ENCODE measurements at regions of chr13 and their contacts with region 1.

Region 1: GRCh38 chr13:55038230-55038629 is 2009.6 kb downstream of the OLFM4 start:
- DNase-seq: no peak
- H3K4me3 ChIP-seq: no peak overlapping the region
- H3K27ac ChIP-seq: no peak overlapping the region
- H3K4me1 ChIP-seq: no peaks in the 10 kb centered on the region
- H3K27me3 ChIP-seq: no peaks in the 10 kb centered on the region
- CTCF ChIP-seq: no peak
- POLR2A ChIP-seq: no peak

Region 2: GRCh38 chr13:54845351-54845965 is 192.8 kb before region 1 on chr13:
- intact Hi-C with region 1: loop called (anchors 10 kb)
- DNase-seq: no peak
- H3K4me3 ChIP-seq: no peak overlapping the region
- H3K27ac ChIP-seq: no peak overlapping the region
- H3K4me1 ChIP-seq: no peaks in the 10 kb centered on the region
- H3K27me3 ChIP-seq: no peaks in the 10 kb centered on the region
- CTCF ChIP-seq: no peak
- POLR2A ChIP-seq: no peak